ENCODE measurements at regions of chr5 and their contacts with region 1.

Region 1: GRCh38 chr5:74632947-74633356 is 7.6 kb downstream of the ENC1 start:
- DNase-seq: peak in 1 of 2 experiments; percentile 62
- H3K4me3 ChIP-seq: no peak overlapping the region
- H3K4me3 Mint-ChIP-seq: no peak overlapping the region
- H3K27ac Mint-ChIP-seq: peak overlapping the region; percentile 91
- H3K4me1 ChIP-seq: peaks cover 74% of the 10 kb centered on the region
- H3K4me1 Mint-ChIP-seq: peaks cover 65% of the 10 kb centered on the region
- H3K27me3 ChIP-seq: no peaks in the 10 kb centered on the region
- H3K27me3 Mint-ChIP-seq: no peaks in the 10 kb centered on the region
- CTCF ChIP-seq: no peak

Region 2: GRCh38 chr5:74595143-74595925 is 37.6 kb before region 1 on chr5:
- CTCF ChIA-PET with region 1: no interaction called
- POLR2A ChIA-PET with region 1: interaction called, 4 read pairs
- intact Hi-C with region 1: loop called (anchors 1 kb)
- DNase-seq: peak; percentile 82 to 89
- H3K4me3 ChIP-seq: no peak overlapping the region
- H3K4me3 Mint-ChIP-seq: peak overlapping the region; percentile 19
- H3K27ac Mint-ChIP-seq: peak overlapping the region; percentile 92
- H3K4me1 ChIP-seq: peaks cover 41% of the 10 kb centered on the region
- H3K4me1 Mint-ChIP-seq: peaks cover 46% of the 10 kb centered on the region
- H3K27me3 ChIP-seq: no peaks in the 10 kb centered on the region
- H3K27me3 Mint-ChIP-seq: no peaks in the 10 kb centered on the region
- CTCF ChIP-seq: no peak

Region 3: DNA sequence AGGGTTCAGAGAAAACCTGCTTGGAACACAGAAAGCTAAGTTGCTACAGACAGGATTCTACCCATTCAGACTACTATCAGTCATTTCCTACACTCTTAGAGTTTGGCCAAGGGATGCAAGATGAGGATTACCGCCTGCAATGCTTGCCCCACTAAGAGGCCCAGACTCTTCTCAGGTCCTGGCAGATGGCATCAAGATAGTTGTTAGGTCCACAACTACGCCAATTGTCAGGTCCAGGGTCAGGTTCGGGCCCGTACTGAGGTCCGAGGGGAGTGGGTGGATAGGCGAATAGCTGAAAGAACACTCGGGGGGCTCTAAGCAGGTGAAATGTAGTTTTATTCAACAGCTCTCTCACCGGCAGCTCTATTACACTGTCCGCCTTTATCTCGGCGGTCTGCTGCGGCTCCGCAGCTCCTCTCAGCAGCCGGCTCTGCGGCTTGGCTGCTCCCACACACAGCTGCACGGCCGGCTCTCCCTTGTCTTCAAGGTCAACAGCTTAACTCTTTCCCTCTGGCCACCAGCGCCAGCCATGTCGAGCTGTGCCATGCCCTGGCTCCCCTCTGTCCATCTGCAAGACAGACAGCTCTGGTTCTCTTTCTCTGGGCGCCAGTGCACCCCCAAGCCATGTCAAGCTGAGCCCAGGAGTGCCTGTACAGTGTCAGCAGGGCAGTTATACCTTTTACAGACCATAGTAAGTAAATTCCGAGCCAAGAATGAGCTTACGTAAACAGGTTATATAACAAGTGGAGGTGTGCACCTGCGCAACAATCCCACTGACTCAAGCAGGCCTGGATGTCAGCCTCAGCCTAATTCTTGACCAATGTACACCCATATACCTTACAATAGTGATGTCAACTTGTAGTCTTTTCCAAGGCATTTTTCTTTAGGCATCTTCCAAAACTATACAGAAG is 16.5 kb before region 1 on chr5:
- CTCF ChIA-PET with region 1: interaction called, 3 read pairs
- POLR2A ChIA-PET with region 1: interaction called, 4 read pairs
- intact Hi-C with region 1: loop called (anchors 1 kb)
- DNase-seq: peak in 1 of 2 experiments; percentile 23
- H3K4me3 ChIP-seq: no peak overlapping the region
- H3K4me3 Mint-ChIP-seq: no peak overlapping the region
- H3K27ac Mint-ChIP-seq: peak overlapping the region; percentile 71
- H3K4me1 ChIP-seq: peaks cover 40% of the 10 kb centered on the region
- H3K4me1 Mint-ChIP-seq: peaks cover 39% of the 10 kb centered on the region
- H3K27me3 ChIP-seq: no peaks in the 10 kb centered on the region
- H3K27me3 Mint-ChIP-seq: no peaks in the 10 kb centered on the region
- CTCF ChIP-seq: no peak